Panc1 (cell line): ENCODE measurements at regions of chr15 and their contacts with region 1.

Region 1: DNA sequence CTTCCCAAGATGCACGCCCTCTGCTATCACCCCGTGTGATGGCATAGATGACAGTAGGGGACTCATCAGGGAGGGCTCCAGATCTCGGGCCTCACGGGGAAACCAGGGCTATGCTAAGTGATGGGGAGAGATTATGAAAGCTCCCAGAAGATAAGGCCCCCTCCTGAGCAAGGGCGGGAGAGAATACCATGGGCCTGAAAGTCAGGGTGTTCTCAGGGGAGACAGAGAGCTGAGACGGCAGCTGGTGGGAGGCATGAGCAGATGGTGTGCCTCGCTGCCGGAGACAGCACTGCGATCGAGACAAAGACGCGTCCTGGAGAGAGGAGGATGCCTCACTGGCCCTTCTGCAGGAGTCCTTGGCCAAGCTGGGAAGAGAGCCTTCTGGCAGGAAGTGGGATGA is 106.5 kb upstream of the ADPGK start:
- DNase-seq: no peak
- ATAC-seq: no peak
- H3K4me3 ChIP-seq: no peak overlapping the region
- H3K27ac ChIP-seq: no peak overlapping the region
- H3K4me1 ChIP-seq: no peaks in the 10 kb centered on the region
- H3K27me3 ChIP-seq: 0 out of 2 replicates have a peak, but pooled peaks cover 2% of the 10 kb centered on the region
- CTCF ChIP-seq: no peak

Region 2: GRCh38 chr15:72770673-72771328 is 119.2 kb before region 1 on chr15:
- CTCF ChIA-PET with region 1: no interaction called
- POLR2A ChIA-PET with region 1: no interaction called
- in situ Hi-C with region 1: no loop called
- intact Hi-C with region 1: no loop called
- DNase-seq: no peak
- ATAC-seq: no peak
- H3K4me3 ChIP-seq: no peak overlapping the region
- H3K27ac ChIP-seq: no peak overlapping the region
- H3K4me1 ChIP-seq: no peaks in the 10 kb centered on the region
- H3K27me3 ChIP-seq: no peaks in the 10 kb centered on the region
- CTCF ChIP-seq: peak; percentile 18; the same call in 1 of the 2 replicates

Region 3: GRCh38 chr15:72818632-72819031 is 71.4 kb before region 1 on chr15:
- CTCF ChIA-PET with region 1: no interaction called
- POLR2A ChIA-PET with region 1: interaction called, 10 read pairs
- in situ Hi-C with region 1: no loop called
- intact Hi-C with region 1: no loop called
- DNase-seq: no peak
- ATAC-seq: no peak
- H3K4me3 ChIP-seq: no peak overlapping the region
- H3K27ac ChIP-seq: no peak overlapping the region
- H3K4me1 ChIP-seq: no peaks in the 10 kb centered on the region
- H3K27me3 ChIP-seq: peaks cover 21% of the 10 kb centered on the region
- CTCF ChIP-seq: no peak

Region 4: DNA sequence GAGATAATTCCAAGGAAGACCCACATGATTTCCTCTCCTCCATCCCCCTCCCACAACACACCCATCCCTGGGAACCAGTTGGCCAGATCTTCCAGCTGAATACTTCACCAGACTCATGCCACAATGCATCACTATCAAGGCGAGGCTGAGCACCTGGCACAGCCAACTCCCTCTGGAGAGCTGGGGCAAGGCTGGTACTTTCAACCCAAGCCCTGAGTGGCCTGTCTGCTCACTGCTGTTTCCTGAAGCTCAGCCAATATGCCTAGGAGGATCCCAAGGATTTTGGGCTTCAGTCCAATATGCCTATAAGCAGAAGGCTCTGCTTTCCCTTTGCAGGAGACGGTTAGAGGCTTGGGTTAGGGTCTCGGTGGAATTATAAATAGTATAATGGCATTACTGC is 71.3 kb after region 1 on chr15:
- CTCF ChIA-PET with region 1: no interaction called
- POLR2A ChIA-PET with region 1: no interaction called
- in situ Hi-C with region 1: no loop called
- intact Hi-C with region 1: no loop called
- DNase-seq: no peak
- ATAC-seq: no peak
- H3K4me3 ChIP-seq: no peak overlapping the region
- H3K27ac ChIP-seq: no peak overlapping the region
- H3K4me1 ChIP-seq: no peaks in the 10 kb centered on the region
- H3K27me3 ChIP-seq: no peaks in the 10 kb centered on the region; the same call in 1 of the 2 replicates
- CTCF ChIP-seq: no peak